ENCODE measurements at regions of chr3 and their contacts with region 1.

Region 1: DNA sequence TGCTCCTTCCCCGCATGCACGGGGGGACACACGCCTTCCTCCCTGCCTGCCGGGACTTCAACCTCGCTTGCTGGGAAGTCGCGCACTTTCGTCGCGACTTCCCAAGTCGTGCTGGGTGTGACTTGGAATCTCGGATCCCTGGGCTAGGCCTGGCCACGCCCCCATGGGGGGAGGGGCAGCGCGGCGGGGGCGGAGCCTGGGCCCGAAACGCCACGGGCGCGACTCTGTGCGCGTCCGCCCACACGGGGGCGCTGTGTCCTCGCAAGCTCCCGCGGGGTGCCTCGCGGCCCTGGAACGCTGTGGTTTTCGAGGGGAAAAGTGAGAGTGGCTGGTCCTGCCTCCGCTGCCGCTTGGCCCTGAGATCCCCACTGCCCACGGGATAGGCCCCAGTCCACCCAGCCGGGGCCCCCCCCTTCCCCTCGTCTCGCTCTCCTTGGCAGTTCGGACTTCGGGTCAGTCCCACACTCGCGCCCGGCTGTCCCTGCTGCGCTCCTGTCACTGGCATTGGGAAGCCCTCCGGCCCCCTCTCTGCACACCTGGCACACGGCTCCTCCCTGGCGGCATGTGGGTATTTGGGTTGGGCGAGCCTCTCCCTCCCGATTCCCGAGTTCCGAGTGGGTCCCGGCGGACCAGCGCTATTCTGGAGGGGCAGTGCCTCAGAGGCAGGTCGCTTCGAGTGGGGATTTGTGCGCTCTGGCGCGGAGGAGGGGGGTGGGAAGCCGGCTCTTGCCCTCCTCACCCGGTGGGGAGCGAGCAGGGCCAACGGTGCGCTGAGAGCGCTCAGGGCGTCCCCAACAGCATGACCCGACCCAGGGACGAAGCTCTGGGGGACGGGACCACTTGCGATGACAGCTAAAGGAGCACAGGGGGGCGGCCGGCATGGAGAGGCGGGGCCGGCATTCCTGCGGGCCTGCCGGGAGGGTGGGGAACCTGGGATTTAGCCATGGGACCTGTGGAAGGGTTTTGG is 23.6 kb downstream of the SEC61A1 start:
- DNase-seq: peak; percentile 79
- ATAC-seq: peak; percentile 88
- H3K4me3 ChIP-seq: peak overlapping the region; percentile 17; the same call in 1 of the 2 replicates
- H3K27ac ChIP-seq: peak overlapping the region; percentile 2; the same call in 1 of the 2 replicates
- H3K4me1 ChIP-seq: peaks cover 27% of the 10 kb centered on the region
- H3K27me3 ChIP-seq: no peaks in the 10 kb centered on the region
- CTCF ChIP-seq: peak; percentile 96
- POLR2A ChIP-seq: no peak
- RAD21 ChIP-seq: peak; percentile 85

Region 2: GRCh38 chr3:127574880-127575878 is 500.6 kb before region 1 on chr3:
- CTCF ChIA-PET with region 1: no interaction called
- POLR2A ChIA-PET with region 1: no interaction called
- dilution Hi-C with region 1: no loop called
- in situ Hi-C with region 1: no loop called
- intact Hi-C with region 1: no loop called
- DNase-seq: peak; percentile 87
- ATAC-seq: peak; percentile 97
- H3K4me3 ChIP-seq: no peak overlapping the region
- H3K27ac ChIP-seq: no peak overlapping the region
- H3K4me1 ChIP-seq: peaks cover 3% of the 10 kb centered on the region; the same call in 1 of the 2 replicates
- H3K27me3 ChIP-seq: no peaks in the 10 kb centered on the region
- CTCF ChIP-seq: peak; percentile 99
- POLR2A ChIP-seq: no peak
- RAD21 ChIP-seq: peak; percentile 92

Region 3: GRCh38 chr3:128123538-128124368 is 48.0 kb after region 1 on chr3 and contains the start of gene RUVBL1:
- CTCF ChIA-PET with region 1: no interaction called
- POLR2A ChIA-PET with region 1: no interaction called
- dilution Hi-C with region 1: no loop called
- in situ Hi-C with region 1: loop called (anchors 10 kb)
- intact Hi-C with region 1: no loop called
- DNase-seq: peak; percentile 96
- ATAC-seq: peak; percentile 100
- H3K4me3 ChIP-seq: peak within 1 kb of the TSS; percentile 86
- H3K27ac ChIP-seq: peak within 1 kb of the TSS; percentile 62
- H3K4me1 ChIP-seq: no peaks in the 10 kb centered on the region
- H3K27me3 ChIP-seq: no peaks in the 10 kb centered on the region
- CTCF ChIP-seq: no peak
- POLR2A ChIP-seq: peak; percentile 33
- RAD21 ChIP-seq: no peak
- total RNA-seq, gene RUVBL1: 83.3 and 99.2 TPM in 2 replicates

Region 4: DNA sequence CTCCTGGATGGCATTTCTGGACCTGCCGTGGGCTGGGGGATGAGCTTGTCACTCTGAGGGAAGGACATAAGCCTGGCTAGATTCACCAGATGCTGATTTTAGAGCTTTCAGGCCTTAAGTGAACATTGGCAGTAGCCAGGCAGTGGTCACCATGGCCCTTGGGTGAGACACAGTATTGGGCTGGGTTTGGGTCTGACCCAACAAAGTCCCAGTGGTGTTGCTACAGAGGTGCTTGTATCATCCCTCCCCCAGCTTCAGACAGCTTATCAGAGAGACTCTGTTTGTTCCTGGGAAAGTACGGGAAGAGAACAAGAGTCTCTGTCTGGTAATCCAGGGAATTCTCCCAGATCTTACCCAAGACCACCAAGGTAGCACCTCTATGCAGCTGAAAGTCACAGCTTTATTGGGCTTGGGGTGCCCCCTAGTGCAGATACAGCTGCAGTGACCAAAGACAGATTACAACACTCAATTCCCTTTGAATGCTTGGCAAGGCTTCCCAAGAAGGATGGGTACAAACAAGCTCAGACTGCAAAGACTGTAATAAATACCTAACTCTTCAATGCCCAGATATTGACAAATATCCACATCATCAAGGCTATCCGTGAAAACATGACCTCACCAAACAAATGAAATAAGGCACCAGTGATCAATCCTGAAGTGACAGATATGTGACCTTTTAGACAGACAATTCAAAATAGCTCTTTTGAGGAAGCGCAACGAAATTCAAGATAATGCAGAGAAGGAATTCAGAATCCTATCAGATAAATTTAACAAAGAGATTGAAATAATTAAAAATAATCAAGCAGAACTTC is 57.7 kb after region 1 on chr3:
- CTCF ChIA-PET with region 1: interaction called, 3 read pairs
- POLR2A ChIA-PET with region 1: no interaction called
- dilution Hi-C with region 1: no loop called
- in situ Hi-C with region 1: loop called (anchors 10 kb)
- intact Hi-C with region 1: loop called (anchors 10 kb)
- DNase-seq: peak; percentile 70
- ATAC-seq: peak; percentile 87
- H3K4me3 ChIP-seq: no peak overlapping the region
- H3K27ac ChIP-seq: no peak overlapping the region
- H3K4me1 ChIP-seq: no peaks in the 10 kb centered on the region
- H3K27me3 ChIP-seq: peaks cover 3% of the 10 kb centered on the region; the same call in 1 of the 2 replicates
- CTCF ChIP-seq: peak; percentile 81
- POLR2A ChIP-seq: no peak
- RAD21 ChIP-seq: peak; percentile 87

Region 5: GRCh38 chr3:128482666-128483656 is 407.2 kb after region 1 on chr3:
- CTCF ChIA-PET with region 1: no interaction called
- POLR2A ChIA-PET with region 1: no interaction called
- dilution Hi-C with region 1: no loop called
- in situ Hi-C with region 1: no loop called
- intact Hi-C with region 1: loop called (anchors 5 kb)
- DNase-seq: peak; percentile 84
- ATAC-seq: peak; percentile 65
- H3K4me3 ChIP-seq: no peak overlapping the region
- H3K27ac ChIP-seq: peak overlapping the region; percentile 83
- H3K4me1 ChIP-seq: peaks cover 23% of the 10 kb centered on the region
- H3K27me3 ChIP-seq: no peaks in the 10 kb centered on the region
- CTCF ChIP-seq: peak; percentile 27
- POLR2A ChIP-seq: no peak
- RAD21 ChIP-seq: no peak

Region 6: DNA sequence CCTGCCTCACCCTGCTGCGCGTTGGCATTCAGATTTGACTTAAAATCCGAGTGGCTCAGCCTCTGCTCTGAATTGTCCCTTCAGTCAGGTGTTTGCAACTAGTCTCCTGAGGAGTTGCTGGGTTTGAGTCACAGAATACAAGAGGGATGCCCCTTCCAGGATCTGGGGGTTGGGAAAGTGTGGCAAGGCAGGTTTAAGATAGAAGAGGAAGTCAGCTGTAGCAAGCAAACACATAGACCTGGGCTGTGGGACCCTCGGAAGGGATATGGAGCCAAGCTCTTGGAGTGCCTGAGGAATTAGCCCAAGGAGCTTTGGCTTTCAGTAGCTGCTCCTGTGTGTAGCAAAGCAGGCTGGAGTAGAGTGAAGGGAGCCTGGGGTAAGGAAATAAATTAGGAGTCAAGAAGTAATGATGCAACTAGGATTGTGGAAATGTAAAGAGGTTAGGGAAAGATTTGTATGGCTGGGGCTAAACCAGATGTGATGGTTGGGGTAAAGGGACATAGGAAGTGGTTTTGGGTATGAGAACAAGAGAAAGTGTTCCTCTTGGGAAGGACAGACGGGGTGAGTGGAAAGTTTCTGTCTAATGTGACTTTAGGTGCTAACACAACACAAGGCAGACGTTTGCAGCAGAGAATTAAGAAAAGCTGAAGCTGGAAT is 691.4 kb after region 1 on chr3:
- CTCF ChIA-PET with region 1: no interaction called
- POLR2A ChIA-PET with region 1: no interaction called
- dilution Hi-C with region 1: no loop called
- in situ Hi-C with region 1: no loop called
- intact Hi-C with region 1: no loop called
- DNase-seq: no peak
- ATAC-seq: no peak
- H3K4me3 ChIP-seq: no peak overlapping the region
- H3K27ac ChIP-seq: no peak overlapping the region
- H3K4me1 ChIP-seq: peaks cover 12% of the 10 kb centered on the region
- H3K27me3 ChIP-seq: no peaks in the 10 kb centered on the region
- CTCF ChIP-seq: no peak
- POLR2A ChIP-seq: no peak; the same call in none of the 2 replicates
- RAD21 ChIP-seq: no peak